Endothelial cell of umbilical vein (primary cell): ENCODE measurements at regions of chr1 and their contacts with region 1.

Region 1: DNA sequence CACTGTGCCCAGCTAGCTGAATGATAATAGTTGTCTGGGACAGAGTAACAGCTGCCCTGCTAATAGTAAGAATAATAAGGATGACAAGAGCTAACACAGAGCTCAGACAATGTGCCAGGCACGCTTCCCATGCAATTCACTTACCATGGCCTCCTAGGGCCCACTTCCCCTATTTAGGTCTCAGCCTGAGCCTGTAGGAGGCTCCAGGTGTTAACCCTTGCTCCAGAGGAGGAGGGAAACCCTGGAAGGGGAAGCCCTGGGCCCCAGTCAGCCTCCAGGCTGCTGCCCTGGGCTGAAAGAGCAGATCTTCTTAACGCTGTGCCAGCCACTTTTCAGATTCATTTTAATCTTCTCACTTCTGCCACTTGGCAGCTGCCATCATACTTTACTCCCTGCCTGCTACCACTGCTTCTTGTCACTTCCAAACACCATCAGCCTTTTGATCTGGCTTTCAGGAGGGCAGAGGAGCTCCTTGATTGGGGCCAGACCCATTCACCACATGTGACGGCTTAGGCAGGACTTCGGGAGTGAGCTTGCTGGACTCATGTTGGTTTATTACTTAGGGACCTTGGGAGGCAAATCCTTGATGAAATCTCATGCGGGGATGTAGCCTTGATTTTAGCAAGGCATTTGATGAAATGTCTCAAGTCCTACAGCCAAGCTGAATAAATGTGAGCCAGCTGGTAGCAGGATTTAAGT is 66.7 kb upstream of the PARP1 start:
- DNase-seq: no peak
- H3K4me3 ChIP-seq: no peak overlapping the region
- H3K27ac ChIP-seq: no peak overlapping the region
- H3K4me1 ChIP-seq: peaks cover 2% of the 10 kb centered on the region
- H3K27me3 ChIP-seq: peaks cover 0 to 9% of the 10 kb centered on the region in 2 experiments
- CTCF ChIP-seq: no peak
- POLR2A ChIP-seq: no peak

Region 2: DNA sequence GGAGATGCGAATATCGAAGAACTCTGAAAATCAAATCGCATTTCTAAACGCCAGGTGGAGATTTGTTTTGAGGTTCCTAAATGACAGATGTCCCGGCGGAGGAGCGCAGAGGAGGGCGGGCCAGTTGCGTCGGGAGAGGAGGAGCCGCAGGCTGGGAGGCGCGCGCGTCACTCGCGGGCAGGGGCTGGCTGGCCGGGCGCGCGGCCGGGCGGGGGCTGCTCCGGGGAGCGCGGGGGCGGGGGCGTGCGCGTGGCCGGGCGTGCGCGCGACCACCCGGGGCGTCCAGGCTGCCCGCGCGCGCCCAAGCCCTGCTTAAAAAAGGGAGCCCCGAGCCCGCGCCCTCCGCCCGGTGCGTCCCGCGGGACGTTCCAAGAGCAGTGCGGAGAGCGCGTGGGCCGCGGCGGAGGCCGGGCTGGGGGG is 364.8 kb before region 1 on chr1:
- CTCF ChIA-PET with region 1: no interaction called
- POLR2A ChIA-PET with region 1: no interaction called
- dilution Hi-C with region 1: no loop called
- intact Hi-C with region 1: no loop called
- DNase-seq: peak; percentile 72
- H3K4me3 ChIP-seq: peak overlapping the region; percentile 60 to 68 (median 63)
- H3K27ac ChIP-seq: peak overlapping the region; percentile 61
- H3K4me1 ChIP-seq: peaks cover 13% of the 10 kb centered on the region
- H3K27me3 ChIP-seq: no peaks in the 10 kb centered on the region
- CTCF ChIP-seq: no peak
- POLR2A ChIP-seq: no peak

Region 3: DNA sequence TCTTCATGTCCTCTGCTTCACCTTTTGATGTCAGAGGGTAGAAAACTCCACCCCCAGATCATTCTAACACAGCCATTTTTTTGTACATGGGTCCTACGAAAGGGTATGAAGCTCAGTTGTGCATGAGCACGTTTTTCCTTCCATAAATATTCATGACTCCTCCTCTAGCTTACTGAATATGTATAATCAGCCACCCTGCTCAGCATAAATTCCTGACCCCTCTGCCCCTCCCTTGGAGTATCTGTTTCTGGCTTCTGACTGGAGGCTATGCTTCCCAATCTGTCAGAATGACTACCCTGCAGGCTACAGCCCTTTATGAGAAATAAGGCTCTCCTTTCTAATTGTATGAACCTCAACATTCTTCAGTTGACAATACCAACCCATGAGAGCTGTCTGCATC is 23.9 kb before region 1 on chr1:
- CTCF ChIA-PET with region 1: no interaction called
- POLR2A ChIA-PET with region 1: no interaction called
- dilution Hi-C with region 1: no loop called
- intact Hi-C with region 1: loop called (anchors 2 kb)
- DNase-seq: no peak
- H3K4me3 ChIP-seq: no peak overlapping the region
- H3K27ac ChIP-seq: no peak overlapping the region
- H3K4me1 ChIP-seq: no peaks in the 10 kb centered on the region
- H3K27me3 ChIP-seq: peaks cover 0 to 6% of the 10 kb centered on the region in 2 experiments
- CTCF ChIP-seq: no peak
- POLR2A ChIP-seq: no peak

Region 4: GRCh38 chr1:226679853-226680516 is 205.4 kb after region 1 on chr1:
- CTCF ChIA-PET with region 1: no interaction called
- POLR2A ChIA-PET with region 1: no interaction called
- dilution Hi-C with region 1: no loop called
- intact Hi-C with region 1: no loop called
- DNase-seq: peak; percentile 56
- H3K4me3 ChIP-seq: peak overlapping the region in 2 of 3 experiments; percentile 7 to 16
- H3K27ac ChIP-seq: no peak overlapping the region
- H3K4me1 ChIP-seq: peaks cover 18% of the 10 kb centered on the region
- H3K27me3 ChIP-seq: no peaks in the 10 kb centered on the region
- CTCF ChIP-seq: no peak
- POLR2A ChIP-seq: no peak